Ascending aorta (tissue), 2 donors: ENCODE measurements at regions of chr4 and their contacts with region 1.

Region 1: GRCh38 chr4:158624889-158625478 is 46.7 kb downstream of the C4orf46 start:
- DNase-seq: no peak
- H3K4me3 ChIP-seq: peak overlapping the region in 1 of 2 donors; percentile 37
- H3K27ac ChIP-seq: peak overlapping the region; percentile 30 to 70
- H3K4me1 ChIP-seq: peaks cover 0 to 4% of the 10 kb centered on the region in 2 donors
- H3K27me3 ChIP-seq: no peaks in the 10 kb centered on the region
- CTCF ChIP-seq: peak; percentile 68 to 73 (median 72)

Region 2: GRCh38 chr4:158259955-158260575 is 364.9 kb before region 1 on chr4:
- intact Hi-C with region 1: loop called (anchors 1 kb)
- DNase-seq: no peak
- H3K4me3 ChIP-seq: peak overlapping the region in 1 of 2 donors; percentile 46
- H3K27ac ChIP-seq: peak overlapping the region in 1 of 2 donors; percentile 27
- H3K4me1 ChIP-seq: no peaks in the 10 kb centered on the region
- H3K27me3 ChIP-seq: no peaks in the 10 kb centered on the region
- CTCF ChIP-seq: peak; percentile 32 to 49 (median 45)